ENCODE measurements at regions of chr4 and their contacts with region 1.

Region 1: DNA sequence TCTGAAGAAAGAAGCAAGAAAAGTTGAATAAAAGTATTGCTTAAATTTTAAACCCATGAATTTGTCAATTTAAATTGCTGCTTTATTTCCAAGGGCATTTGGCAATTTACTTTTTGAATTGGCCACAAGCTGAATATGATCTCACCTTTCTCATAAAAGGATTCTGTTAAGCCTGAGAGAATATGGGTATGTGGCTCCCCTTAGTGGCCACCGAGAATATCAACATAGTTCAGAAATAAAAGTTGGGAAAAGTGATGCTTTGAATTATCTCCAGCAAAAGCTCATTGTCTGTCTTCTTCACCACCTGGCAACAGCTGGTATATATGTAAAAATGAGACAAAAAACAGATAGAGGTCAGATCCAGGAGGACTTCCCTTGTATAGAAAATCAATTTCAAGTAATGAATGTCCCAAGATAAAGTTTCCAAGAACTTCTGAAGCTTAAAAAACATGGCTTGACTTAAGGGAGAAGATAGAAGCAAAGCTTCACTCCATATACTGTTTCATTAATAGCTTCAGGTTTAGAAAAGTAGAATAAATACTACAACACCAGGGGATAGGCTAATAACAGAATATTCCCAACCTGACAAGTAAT is 290.7 kb upstream of the FAM241A start:
- DNase-seq: no peak
- ATAC-seq: peak; percentile 73
- H3K4me3 Mint-ChIP-seq: no peak overlapping the region
- H3K27ac Mint-ChIP-seq: no peak overlapping the region
- H3K4me1 Mint-ChIP-seq: no peaks in the 10 kb centered on the region
- H3K27me3 Mint-ChIP-seq: no peaks in the 10 kb centered on the region
- CTCF ChIP-seq: peak; percentile 42; the same call in 1 of the 2 replicates

Region 2: GRCh38 chr4:111641955-111642579 is 212.5 kb before region 1 on chr4:
- CTCF ChIA-PET with region 1: interaction called, 12 read pairs
- POLR2A ChIA-PET with region 1: no interaction called
- DNase-seq: peak; percentile 64
- ATAC-seq: peak; percentile 87
- H3K4me3 Mint-ChIP-seq: no peak overlapping the region
- H3K27ac Mint-ChIP-seq: no peak overlapping the region
- H3K4me1 Mint-ChIP-seq: peaks cover 5% of the 10 kb centered on the region; the same call in 1 of the 2 replicates
- H3K27me3 Mint-ChIP-seq: no peaks in the 10 kb centered on the region
- CTCF ChIP-seq: peak; percentile 72

Region 3: DNA sequence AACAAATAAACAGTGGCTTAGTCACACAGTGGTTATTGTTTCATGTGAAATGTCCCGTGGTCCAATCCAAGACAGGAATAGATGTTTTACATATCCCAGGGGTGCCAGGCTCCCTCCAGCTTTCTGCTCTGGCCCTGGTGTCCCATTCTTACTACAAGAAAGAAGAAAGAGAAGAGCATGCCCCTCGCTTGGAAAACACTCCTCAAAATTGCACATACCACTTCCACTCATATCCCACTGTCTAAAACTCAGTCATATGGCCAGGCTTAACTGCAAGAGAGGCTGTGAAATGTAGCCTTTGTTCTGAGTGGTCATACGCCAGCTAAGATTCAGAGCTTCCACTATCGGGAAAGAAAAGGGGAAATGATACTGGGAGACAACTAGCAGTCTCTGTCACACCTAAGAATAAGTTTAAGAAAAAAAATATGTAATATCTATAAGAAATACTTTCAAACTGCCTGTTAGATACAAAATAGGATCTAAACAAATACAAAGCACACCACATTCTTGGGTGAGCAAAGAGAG is 16.1 kb before region 1 on chr4:
- CTCF ChIA-PET with region 1: interaction called, 11 read pairs
- POLR2A ChIA-PET with region 1: no interaction called
- DNase-seq: no peak
- ATAC-seq: no peak
- H3K4me3 Mint-ChIP-seq: no peak overlapping the region
- H3K27ac Mint-ChIP-seq: peak overlapping the region; percentile 65; the same call in 1 of the 2 replicates
- H3K4me1 Mint-ChIP-seq: peaks cover 10% of the 10 kb centered on the region; the same call in 1 of the 2 replicates
- H3K27me3 Mint-ChIP-seq: no peaks in the 10 kb centered on the region; the same call in 1 of the 2 replicates
- CTCF ChIP-seq: no peak

Region 4: DNA sequence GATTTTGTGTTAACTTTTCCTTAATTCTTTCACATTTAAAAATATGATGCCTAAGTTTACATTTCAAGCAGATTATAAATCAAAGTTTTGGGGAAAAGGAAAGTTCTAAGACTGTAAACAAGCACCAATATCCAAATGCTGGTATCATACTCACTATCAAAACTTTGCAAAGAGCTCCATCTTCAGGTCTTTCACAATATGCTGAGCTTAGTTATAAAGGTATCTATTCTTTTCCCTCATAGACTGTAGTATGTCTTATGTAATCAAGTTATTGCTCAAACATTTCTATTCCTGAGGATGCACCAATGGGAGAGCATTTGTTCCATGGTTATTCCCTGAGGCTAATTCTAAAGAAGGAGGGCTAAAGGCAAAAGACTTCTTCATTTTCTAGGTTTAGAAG is 82.8 kb after region 1 on chr4:
- CTCF ChIA-PET with region 1: interaction called, 13 read pairs
- POLR2A ChIA-PET with region 1: no interaction called
- DNase-seq: no peak
- ATAC-seq: peak; percentile 77
- H3K4me3 Mint-ChIP-seq: no peak overlapping the region
- H3K27ac Mint-ChIP-seq: no peak overlapping the region
- H3K4me1 Mint-ChIP-seq: peaks cover 14% of the 10 kb centered on the region
- H3K27me3 Mint-ChIP-seq: no peaks in the 10 kb centered on the region
- CTCF ChIP-seq: no peak

Region 5: DNA sequence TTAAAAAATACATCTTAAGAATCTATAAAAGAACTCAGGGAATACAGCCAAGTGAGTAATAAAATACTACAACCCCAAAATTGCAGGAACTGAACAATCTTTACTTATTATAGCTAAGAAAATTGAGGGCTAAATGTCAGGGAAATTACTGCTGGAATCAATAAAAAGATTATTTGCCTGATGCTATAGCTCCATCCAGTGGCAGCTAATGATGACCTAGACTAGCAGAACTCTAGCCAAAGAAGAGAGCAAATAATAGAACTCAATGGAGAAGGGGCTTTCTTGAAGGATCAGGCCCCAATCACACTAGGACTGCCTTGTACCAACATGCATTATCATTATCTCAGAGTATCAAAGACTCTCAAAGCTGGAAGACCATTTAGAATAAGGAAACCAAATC is 205.6 kb after region 1 on chr4:
- CTCF ChIA-PET with region 1: interaction called, 13 read pairs
- POLR2A ChIA-PET with region 1: no interaction called
- DNase-seq: no peak
- ATAC-seq: peak; percentile 70
- H3K4me3 Mint-ChIP-seq: no peak overlapping the region
- H3K27ac Mint-ChIP-seq: no peak overlapping the region
- H3K4me1 Mint-ChIP-seq: peaks cover 12% of the 10 kb centered on the region
- H3K27me3 Mint-ChIP-seq: no peaks in the 10 kb centered on the region
- CTCF ChIP-seq: no peak

Measured in WTC11 (cell line).